ENCODE measurements at regions of chr17 and their contacts with region 1.

Region 1: DNA sequence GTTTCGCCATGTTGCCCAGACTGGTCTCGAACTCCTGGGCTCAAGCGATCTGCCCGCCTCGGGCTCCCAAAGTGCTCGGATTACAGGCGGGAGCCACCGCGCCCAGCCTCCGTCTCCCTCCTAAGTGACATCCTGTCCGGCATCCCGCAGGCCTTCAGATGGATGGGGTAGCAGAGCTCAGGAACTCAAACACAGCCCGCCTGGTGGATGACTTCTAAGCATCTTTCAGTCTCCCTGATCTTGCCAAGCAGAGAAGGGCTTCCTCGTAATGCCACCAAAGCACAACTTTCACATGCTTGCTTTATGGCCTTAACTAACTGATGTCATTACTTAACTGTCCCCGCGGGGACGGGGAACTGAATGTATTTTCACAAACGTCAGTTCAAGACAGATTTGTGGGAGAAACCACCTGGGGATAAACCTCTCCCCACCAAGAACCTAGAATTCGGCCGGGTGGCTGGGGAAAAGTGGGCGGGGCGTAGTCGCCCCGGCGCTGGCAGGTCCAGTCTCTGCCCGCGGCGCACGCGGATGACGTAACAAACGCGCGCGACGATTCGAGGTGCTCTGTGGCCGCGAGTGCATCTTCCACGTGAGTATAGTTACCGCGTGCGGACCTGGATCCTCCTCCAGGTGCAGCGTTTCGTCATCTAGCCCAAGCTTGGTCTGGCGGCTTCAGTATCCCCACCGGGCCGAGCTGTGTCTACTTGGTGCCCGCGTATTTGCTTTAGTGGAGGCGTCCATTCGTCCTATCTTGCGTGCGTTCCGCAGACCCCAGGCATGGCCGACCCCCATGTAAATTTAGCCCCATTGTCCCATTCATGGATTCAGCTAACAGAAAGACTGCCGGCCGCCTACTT is at the start of gene PFAS:
- DNase-seq: peak; percentile 90
- ATAC-seq: peak; percentile 64
- H3K4me3 ChIP-seq: peak within 1 kb of the TSS; percentile 85 to 99
- H3K27ac ChIP-seq: peak within 1 kb of the TSS; percentile 98
- H3K4me1 ChIP-seq: peaks cover 14 to 26% of the 10 kb centered on the region in 2 experiments
- H3K27me3 ChIP-seq: no peaks in the 10 kb centered on the region
- CTCF ChIP-seq: no peak
- POLR2A ChIP-seq: peak; percentile 89
- RAD21 ChIP-seq: no peak
- total RNA-seq, gene PFAS: 80.6 TPM

Region 2: GRCh38 chr17:7844292-7845154 is 404.5 kb before region 1 on chr17:
- CTCF ChIA-PET with region 1: no interaction called
- POLR2A ChIA-PET with region 1: no interaction called
- RAD21 ChIA-PET with region 1: no interaction called
- intact Hi-C with region 1: no loop called
- DNase-seq: peak; percentile 90
- ATAC-seq: peak; percentile 77
- H3K4me3 ChIP-seq: peak overlapping the region; percentile 92 to 94
- H3K27ac ChIP-seq: peak overlapping the region; percentile 97
- H3K4me1 ChIP-seq: peaks cover 22 to 34% of the 10 kb centered on the region in 2 experiments
- H3K27me3 ChIP-seq: no peaks in the 10 kb centered on the region
- CTCF ChIP-seq: no peak
- POLR2A ChIP-seq: peak; percentile 51
- RAD21 ChIP-seq: no peak

Region 3: DNA sequence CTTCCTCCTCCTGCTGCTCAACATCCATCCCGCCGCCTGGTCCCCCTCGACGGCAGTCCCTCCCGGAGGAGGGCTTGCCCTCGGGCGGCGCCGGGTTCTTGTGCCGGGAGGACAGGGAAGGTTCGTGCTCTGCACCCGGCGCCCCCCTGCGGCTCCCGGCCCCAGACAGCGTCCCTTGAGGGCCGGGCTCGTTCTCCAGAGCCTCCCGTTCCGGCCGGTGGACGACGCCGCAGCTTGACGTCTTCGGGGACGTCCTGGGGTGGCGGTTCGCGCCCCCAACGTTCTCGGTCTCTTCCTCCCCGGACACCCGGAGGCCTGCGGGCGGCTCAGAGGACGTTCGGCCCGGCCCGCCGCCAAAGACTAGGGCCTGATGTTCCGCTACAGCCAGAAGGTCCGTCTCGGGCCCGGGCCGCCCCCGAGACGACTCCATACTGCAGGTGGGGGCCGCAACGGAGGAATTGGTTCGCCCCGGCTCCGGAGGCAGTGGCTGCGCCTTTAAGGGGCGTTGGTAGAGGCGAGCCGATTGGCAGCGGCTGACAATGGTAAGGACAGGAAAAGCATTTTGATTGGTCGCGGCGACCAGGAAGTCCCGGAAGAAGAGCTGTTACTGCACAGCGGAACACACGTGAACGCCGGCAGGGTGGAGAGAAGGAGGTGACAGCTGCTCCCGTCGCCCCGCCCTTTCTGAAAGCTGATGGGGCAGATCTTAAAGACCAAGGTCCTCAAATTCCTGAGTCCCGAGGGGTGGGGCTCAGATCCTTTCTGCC is 59.1 kb before region 1 on chr17 and contains the start of gene BORCS6:
- CTCF ChIA-PET with region 1: interaction called, 4 read pairs
- POLR2A ChIA-PET with region 1: interaction called, 9 read pairs
- RAD21 ChIA-PET with region 1: no interaction called
- intact Hi-C with region 1: loop called (anchors 2 kb)
- DNase-seq: peak; percentile 96
- ATAC-seq: peak; percentile 64
- H3K4me3 ChIP-seq: peak within 1 kb of the TSS; percentile 75 to 83
- H3K27ac ChIP-seq: peak within 1 kb of the TSS; percentile 89
- H3K4me1 ChIP-seq: peaks cover 32 to 64% of the 10 kb centered on the region in 2 experiments
- H3K27me3 ChIP-seq: no peaks in the 10 kb centered on the region
- CTCF ChIP-seq: no peak
- POLR2A ChIP-seq: no peak
- RAD21 ChIP-seq: no peak
- total RNA-seq, gene BORCS6: 6.4 TPM

Region 4: DNA sequence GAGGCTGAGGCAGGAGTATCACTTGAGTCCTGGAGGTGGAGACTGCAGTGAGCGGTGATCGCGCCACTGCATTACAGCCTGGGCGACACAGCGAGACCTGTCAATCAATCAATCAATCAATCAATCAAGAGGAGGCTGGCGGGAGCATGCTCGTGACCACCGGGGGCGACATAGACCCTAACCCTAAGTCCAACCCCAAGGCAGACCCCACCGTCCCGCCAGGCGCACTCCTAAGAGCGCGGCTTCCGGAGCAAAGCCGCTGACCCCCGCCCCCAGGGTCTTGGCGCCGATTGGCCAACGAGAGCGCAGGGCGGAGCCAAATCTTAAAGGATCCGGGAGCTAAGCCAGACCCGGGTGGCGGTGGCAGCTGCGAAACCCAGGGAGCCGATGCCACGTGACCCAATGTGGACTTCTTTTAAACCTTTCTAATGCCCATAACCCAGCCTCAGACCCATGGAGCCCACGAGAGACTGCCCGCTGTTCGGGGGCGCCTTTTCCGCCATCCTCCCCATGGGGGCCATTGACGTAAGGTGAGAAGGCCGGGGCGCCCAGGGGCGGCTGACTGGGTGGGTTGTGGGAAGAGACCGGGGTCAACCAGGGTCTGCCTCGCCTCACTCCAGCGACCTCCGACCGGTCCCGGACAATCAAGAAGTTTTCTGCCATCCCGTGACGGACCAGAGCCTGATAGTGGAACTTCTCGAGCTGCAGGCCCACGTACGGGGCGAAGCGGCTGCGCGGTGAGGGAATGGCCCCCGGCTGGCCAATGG is 39.5 kb after region 1 on chr17 and contains the start of gene RANGRF:
- CTCF ChIA-PET with region 1: no interaction called
- POLR2A ChIA-PET with region 1: interaction called, 4 read pairs
- RAD21 ChIA-PET with region 1: no interaction called
- intact Hi-C with region 1: loop called (anchors 5 kb)
- DNase-seq: peak; percentile 62
- ATAC-seq: peak; percentile 88
- H3K4me3 ChIP-seq: peak within 1 kb of the TSS; percentile 69 to 89
- H3K27ac ChIP-seq: peak within 1 kb of the TSS; percentile 80
- H3K4me1 ChIP-seq: peaks cover 15 to 34% of the 10 kb centered on the region in 2 experiments; a peak in 3 of 4 replicates
- H3K27me3 ChIP-seq: no peaks in the 10 kb centered on the region
- CTCF ChIP-seq: no peak
- POLR2A ChIP-seq: peak; percentile 58
- RAD21 ChIP-seq: no peak
- total RNA-seq, gene RANGRF: 33.2 TPM

Region 5: GRCh38 chr17:8294814-8295316 is 45.9 kb after region 1 on chr17:
- CTCF ChIA-PET with region 1: no interaction called
- POLR2A ChIA-PET with region 1: interaction called, 25 read pairs
- RAD21 ChIA-PET with region 1: no interaction called
- intact Hi-C with region 1: loop called (anchors 1 kb)
- DNase-seq: no peak
- ATAC-seq: peak; percentile 24
- H3K4me3 ChIP-seq: peak overlapping the region; percentile 54 to 65
- H3K27ac ChIP-seq: peak overlapping the region; percentile 93
- H3K4me1 ChIP-seq: peaks cover 19 to 34% of the 10 kb centered on the region in 2 experiments
- H3K27me3 ChIP-seq: no peaks in the 10 kb centered on the region
- CTCF ChIP-seq: no peak
- POLR2A ChIP-seq: no peak
- RAD21 ChIP-seq: no peak

Region 6: GRCh38 chr17:8300627-8301242 is 51.8 kb after region 1 on chr17:
- CTCF ChIA-PET with region 1: interaction called, 9 read pairs
- POLR2A ChIA-PET with region 1: interaction called, 25 read pairs
- RAD21 ChIA-PET with region 1: interaction called in 1 of 2 experiments, 4 read pairs
- intact Hi-C with region 1: loop called (anchors 1 kb)
- DNase-seq: peak; percentile 62
- ATAC-seq: peak; percentile 94
- H3K4me3 ChIP-seq: no peak overlapping the region
- H3K27ac ChIP-seq: peak overlapping the region; percentile 27; the same call in 1 of the 2 replicates
- H3K4me1 ChIP-seq: peaks cover 6 to 27% of the 10 kb centered on the region in 2 experiments
- H3K27me3 ChIP-seq: no peaks in the 10 kb centered on the region
- CTCF ChIP-seq: peak; percentile 79 to 87 (median 84)
- POLR2A ChIP-seq: no peak
- RAD21 ChIP-seq: peak; percentile 96